Activated naive CD8-positive, alpha-beta T cell treated with anti-CD3 and anti-CD28 coated beads, Interleukin-2, amount 10 ng/mL, durations not matched to agents 7 days and 5 days (primary cell): ENCODE measurements at regions of chr9 and their contacts with region 1.

Region 1: DNA sequence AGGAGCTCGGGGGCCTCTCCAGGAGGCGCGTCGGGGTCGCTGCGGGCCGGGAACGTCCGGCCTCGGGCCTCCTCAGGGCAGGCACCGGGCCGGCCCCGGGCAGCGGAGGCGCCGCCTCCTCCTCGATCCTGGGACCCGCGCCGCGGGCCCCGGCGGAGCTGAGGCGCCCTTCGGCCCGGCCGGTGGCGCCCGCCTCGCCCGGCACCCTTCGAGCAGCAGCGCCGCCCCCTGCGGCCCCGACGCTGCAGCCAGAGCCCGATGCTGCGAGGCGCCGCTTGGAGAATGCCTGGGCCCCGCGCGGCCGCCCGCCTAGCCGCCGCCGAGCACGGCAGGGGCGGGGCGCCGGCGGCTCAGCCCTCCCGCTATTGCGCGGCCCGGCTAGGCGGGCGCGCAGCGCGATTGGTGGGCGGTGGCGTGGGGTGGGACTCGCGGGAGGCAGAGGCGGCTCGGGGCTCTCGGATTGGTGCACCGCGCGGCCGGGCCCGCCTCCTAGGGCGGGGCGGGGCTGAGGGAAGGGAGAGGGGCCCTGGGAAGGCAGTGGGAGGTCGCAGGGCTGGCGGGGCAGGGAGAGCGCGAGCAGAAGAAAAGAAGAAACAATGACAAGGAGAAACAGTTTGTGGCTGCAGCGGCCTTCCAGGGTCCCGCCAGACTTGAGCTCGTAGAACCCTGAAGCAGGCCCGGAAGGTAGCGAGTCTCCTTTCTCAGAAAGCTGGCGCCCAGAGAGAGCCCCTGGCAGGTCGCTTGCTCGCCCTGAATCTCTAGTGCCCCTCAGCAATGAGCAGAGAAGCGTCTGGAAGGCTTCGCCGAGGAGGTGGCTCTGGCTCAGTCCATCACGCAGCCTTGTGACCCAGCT is at the start of gene EEIG1:
- DNase-seq: peak; percentile 99
- ATAC-seq: peak; percentile 87
- H3K4me3 Mint-ChIP-seq: peak within 1 kb of the TSS; percentile 92
- H3K27ac Mint-ChIP-seq: peak within 1 kb of the TSS; percentile 93
- H3K4me1 Mint-ChIP-seq: peaks cover 37% of the 10 kb centered on the region
- H3K27me3 Mint-ChIP-seq: no peaks in the 10 kb centered on the region
- total RNA-seq, gene EEIG1: 329 to 366 TPM

Region 2: DNA sequence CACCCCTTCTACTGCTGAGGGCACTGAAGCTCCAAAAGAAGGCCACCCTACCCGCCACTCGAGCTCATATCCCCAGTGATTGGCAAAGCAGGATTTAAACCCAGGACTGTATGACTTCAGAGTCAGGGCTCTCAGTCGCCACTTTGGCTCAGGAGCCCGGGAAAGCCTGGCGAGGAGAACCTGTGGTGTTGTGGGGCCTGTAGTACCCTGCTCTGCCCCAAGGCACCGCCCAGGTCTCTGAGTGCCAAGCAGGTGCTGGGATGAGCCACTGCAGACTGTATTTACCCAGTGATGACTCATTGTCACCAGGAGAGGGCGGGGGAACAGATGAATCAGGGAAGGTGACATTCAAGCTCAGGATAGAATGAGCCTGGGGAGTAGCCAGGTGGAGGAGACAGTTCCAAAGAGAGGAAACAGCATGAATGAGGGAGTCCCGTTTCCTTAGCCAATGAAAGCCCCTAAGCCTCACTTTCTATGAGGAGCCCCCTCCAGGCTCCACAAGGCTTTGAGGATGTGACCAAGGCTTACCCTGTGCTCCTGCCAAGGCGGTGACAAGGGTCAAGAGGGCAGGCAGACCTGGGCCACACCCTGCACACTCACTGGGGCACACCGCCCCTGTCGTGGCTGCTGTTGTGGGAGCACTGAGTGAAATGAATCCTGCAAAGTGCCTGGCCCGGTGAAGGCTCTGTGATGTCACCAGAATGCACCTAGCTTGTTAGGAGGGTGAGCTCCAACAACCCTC is 25.5 kb before region 1 on chr9:
- POLR2A ChIA-PET with region 1: interaction called, 13 read pairs
- DNase-seq: no peak
- ATAC-seq: peak; percentile 89
- H3K4me3 Mint-ChIP-seq: peak overlapping the region; percentile 74
- H3K27ac Mint-ChIP-seq: peak overlapping the region; percentile 69
- H3K4me1 Mint-ChIP-seq: peaks cover 67% of the 10 kb centered on the region
- H3K27me3 Mint-ChIP-seq: no peaks in the 10 kb centered on the region

Region 3: DNA sequence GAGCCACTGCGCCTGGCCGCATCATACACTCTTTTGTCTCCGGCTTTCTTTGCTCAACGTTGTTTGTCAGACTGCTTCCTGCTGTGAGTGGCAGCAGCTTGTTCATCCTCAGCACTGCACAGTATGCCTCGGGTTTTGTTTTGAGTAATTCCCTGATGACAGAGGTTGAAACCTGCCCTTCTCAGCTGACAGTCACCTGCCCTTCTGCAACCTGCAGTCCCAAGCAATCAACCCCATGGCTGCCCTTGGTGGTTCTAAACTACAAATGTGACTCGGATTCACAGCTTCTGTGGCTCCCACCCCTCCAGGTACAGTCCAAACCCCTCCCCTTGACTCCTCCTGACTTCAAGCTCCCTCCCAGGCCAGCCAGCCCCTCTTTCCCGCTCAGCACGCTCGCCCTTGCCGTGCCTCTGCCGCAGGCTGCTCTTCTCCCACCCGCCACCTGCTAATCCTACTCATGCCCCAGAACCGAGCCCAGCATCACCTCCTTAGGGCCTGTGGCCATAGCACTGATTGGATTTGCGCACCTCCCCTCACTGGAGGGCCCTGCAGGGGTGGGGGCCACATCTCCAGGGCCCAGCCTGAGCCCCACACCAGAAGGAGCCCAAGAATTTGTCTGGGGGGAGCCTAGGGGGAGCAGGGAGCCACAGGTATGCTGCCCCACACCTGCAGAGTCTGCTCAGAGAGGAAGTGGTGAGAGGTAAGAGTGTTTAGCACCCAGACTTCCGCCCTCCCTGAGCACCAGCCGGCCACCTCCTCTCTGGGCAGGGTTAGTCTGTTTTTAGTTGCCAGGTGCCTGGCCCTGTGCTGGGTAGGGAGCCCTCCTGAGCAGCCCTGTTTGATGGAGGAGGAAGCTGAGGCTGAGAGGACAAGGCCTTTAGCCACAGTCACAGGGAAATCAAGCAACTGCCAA is 10.3 kb before region 1 on chr9:
- POLR2A ChIA-PET with region 1: interaction called, 70 read pairs
- DNase-seq: peak; percentile 70
- ATAC-seq: peak; percentile 71
- H3K4me3 Mint-ChIP-seq: peak overlapping the region; percentile 92
- H3K27ac Mint-ChIP-seq: peak overlapping the region; percentile 100
- H3K4me1 Mint-ChIP-seq: peaks cover 90% of the 10 kb centered on the region
- H3K27me3 Mint-ChIP-seq: no peaks in the 10 kb centered on the region

Region 4: GRCh38 chr9:128001779-128002298 is 20.9 kb after region 1 on chr9:
- POLR2A ChIA-PET with region 1: interaction called, 70 read pairs
- DNase-seq: no peak
- ATAC-seq: no peak
- H3K4me3 Mint-ChIP-seq: no peak overlapping the region
- H3K27ac Mint-ChIP-seq: no peak overlapping the region
- H3K4me1 Mint-ChIP-seq: peaks cover 10% of the 10 kb centered on the region
- H3K27me3 Mint-ChIP-seq: peaks cover 7% of the 10 kb centered on the region

Region 5: GRCh38 chr9:128007566-128008138 is 26.7 kb after region 1 on chr9:
- POLR2A ChIA-PET with region 1: interaction called, 70 read pairs
- DNase-seq: peak; percentile 77
- ATAC-seq: peak; percentile 86
- H3K4me3 Mint-ChIP-seq: peak overlapping the region; percentile 77
- H3K27ac Mint-ChIP-seq: peak overlapping the region; percentile 93
- H3K4me1 Mint-ChIP-seq: peaks cover 34% of the 10 kb centered on the region
- H3K27me3 Mint-ChIP-seq: no peaks in the 10 kb centered on the region

Region 6: DNA sequence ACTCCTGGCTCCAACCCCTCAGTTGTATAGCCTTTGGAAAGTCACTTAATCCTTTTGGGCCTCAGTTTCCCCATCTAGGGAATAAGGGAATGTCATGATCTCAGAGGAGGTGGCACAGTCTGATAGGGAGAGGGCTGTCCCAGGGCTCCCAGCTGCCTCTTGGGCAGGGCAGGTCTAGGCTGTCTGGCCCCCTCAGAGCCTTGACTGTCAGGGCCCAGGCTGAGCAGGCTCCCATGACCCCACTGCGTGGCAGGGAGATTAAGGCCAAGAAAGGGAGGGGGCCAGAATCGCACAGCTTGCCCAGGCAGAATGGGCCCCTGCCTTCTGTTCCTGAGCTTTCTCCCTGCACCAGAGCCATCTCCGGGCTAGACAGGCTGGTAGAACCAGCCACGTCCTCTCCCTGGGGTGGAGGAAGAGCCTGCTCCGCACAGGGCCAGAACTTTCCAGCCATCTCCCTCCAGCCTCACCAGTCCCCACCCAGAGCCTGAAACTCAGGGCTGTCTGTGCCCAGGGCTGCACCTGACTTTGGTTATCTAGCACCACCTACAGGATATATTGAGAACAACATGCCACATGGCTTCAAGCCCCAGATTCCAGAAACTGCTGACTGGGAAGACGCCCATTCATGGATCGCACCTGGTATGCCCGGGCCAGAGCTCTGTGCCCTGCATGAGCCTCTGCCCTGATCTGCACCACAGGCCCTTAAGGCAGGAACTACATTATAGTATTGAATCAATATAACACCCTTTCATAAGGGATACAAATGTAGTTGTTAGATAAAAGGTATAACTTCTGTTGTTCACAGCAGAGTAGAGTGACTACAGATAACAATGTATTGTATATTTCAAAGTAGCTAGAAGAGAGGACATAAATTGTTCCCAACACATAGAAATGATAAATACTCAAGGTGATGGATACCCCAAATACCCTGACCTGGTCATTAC is 54.2 kb after region 1 on chr9:
- POLR2A ChIA-PET with region 1: interaction called, 389 read pairs
- DNase-seq: peak; percentile 66
- ATAC-seq: peak; percentile 62
- H3K4me3 Mint-ChIP-seq: no peak overlapping the region
- H3K27ac Mint-ChIP-seq: peak overlapping the region; percentile 76
- H3K4me1 Mint-ChIP-seq: peaks cover 28% of the 10 kb centered on the region
- H3K27me3 Mint-ChIP-seq: no peaks in the 10 kb centered on the region